Mammary epithelial cell (primary cell): ENCODE measurements at regions of chr22 and their contacts with region 1.

Region 1: GRCh38 chr22:22207845-22208564 is 36.6 kb upstream of the VPREB1 start:
- DNase-seq: peak; percentile 66
- H3K4me3 ChIP-seq: no peak overlapping the region
- H3K27ac ChIP-seq: no peak overlapping the region
- H3K4me1 ChIP-seq: peaks cover 25% of the 10 kb centered on the region
- H3K27me3 ChIP-seq: no peaks in the 10 kb centered on the region
- CTCF ChIP-seq: peak; percentile 80 to 86

Region 2: DNA sequence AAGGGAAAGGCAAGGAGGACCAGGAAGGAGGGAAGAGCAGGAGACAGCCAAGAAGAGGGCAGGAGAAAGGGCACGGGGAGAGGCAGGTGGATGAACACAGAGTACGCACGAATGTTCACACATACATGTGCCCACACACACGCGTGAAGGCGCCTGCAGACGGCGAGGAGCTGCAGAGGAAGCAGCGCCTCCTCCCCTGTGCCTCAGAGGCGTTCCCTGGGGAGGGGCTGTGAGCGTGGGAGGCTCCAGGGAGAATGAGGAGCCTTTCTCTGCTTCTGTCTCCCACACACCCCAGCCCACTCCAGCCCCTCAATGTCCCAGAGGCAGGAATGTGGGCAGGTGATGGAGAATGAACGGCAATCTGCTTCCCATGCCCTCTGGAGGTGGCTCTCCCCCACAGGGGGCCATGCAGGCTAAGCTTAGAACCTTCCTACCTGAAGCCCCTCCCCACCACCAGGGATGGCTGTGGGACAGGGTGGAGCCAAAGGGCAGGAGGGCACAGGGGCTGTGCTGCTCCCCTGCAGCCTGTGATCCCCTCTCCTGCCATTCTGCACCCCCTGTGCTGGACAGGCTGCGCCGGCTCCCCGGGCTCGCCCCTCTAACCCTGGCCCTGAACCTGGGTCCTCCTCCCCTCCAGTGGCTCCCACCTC is 280.7 kb before region 1 on chr22:
- CTCF ChIA-PET with region 1: no interaction called
- dilution Hi-C with region 1: no loop called
- in situ Hi-C with region 1: no loop called
- intact Hi-C with region 1: no loop called
- DNase-seq: no peak
- H3K4me3 ChIP-seq: no peak overlapping the region
- H3K27ac ChIP-seq: no peak overlapping the region
- H3K4me1 ChIP-seq: no peaks in the 10 kb centered on the region
- H3K27me3 ChIP-seq: no peaks in the 10 kb centered on the region
- CTCF ChIP-seq: no peak

Region 3: GRCh38 chr22:22060200-22061084 is 147.6 kb before region 1 on chr22:
- CTCF ChIA-PET with region 1: interaction called, 5 read pairs
- dilution Hi-C with region 1: no loop called
- in situ Hi-C with region 1: no loop called
- intact Hi-C with region 1: loop called (anchors 1 kb)
- DNase-seq: peak; percentile 39
- H3K4me3 ChIP-seq: no peak overlapping the region
- H3K27ac ChIP-seq: no peak overlapping the region
- H3K4me1 ChIP-seq: peaks cover 4% of the 10 kb centered on the region
- H3K27me3 ChIP-seq: no peaks in the 10 kb centered on the region
- CTCF ChIP-seq: peak; percentile 80 to 99

Region 4: DNA sequence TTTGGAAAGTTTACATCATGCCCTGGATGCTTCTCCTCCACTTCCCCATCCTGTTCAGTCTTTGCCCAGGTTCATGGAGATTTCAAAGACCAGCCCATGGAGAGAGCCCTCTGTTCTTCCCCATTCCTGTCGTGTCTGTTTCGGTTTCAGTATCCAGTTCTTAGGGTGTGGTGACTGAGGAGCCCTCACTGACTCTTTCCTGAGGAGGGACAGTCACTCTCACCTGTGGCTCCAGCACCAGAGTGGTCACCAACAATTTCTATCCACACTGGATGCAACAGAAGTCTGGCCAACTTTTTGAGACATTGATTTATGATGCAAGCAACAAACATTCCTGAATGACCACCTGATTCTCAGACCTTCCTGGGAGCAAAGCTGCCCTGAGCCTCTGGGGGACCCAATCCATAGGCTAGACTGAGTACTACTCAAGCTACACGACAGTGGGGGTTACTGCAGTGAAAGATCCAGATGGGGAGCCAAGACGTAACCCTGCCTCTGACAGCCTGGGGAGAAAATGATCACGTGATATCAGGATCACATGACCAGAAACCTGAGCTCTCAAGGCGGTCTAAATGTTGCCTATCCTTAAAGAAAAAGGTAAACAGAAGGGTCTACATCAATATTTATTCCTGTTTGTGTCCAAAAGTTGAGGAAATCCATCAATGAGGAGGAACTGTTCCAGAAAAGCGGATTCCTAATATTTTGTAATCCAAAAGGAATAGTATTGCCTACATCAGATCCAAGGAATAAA is 39.6 kb before region 1 on chr22:
- CTCF ChIA-PET with region 1: no interaction called
- dilution Hi-C with region 1: no loop called
- in situ Hi-C with region 1: no loop called
- intact Hi-C with region 1: no loop called
- DNase-seq: peak; percentile 42
- H3K4me3 ChIP-seq: no peak overlapping the region
- H3K27ac ChIP-seq: no peak overlapping the region
- H3K4me1 ChIP-seq: no peaks in the 10 kb centered on the region
- H3K27me3 ChIP-seq: no peaks in the 10 kb centered on the region
- CTCF ChIP-seq: no peak

Region 5: DNA sequence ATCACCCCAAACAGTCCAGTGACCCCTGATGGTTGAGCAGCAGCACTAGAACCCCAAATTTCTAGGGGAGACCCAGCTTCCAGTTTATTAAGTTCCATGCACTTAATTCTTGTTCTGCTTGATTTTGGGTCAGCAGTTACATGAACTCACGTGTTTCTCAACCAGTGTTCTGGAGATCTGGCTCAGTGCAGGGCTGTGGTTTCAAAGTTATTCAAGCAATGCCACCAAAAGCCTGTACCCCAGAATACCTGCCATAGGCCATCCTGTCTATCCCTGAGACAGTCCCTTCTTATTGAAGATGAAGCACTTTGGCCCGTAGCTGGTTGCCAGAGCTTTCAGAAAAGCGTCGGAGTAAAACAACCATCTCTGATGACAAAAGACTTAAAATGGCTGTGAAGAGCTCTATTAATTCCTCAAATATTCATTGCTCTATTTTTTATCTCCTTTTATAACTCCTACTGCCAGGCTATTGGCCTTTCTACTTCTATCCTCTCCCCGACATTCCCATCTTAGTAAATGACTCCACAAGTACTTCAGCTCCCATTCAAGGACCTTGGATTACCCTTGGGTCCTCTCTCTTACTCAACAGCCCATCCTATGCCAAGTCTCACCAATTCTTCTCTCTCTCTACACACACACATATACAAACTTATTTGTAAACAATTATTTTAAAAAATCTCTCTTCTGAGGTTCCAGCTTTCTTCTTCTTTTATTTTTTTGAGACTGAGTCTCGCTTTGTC is 18.6 kb after region 1 on chr22:
- CTCF ChIA-PET with region 1: interaction called, 20 read pairs
- dilution Hi-C with region 1: no loop called
- in situ Hi-C with region 1: no loop called
- intact Hi-C with region 1: no loop called
- DNase-seq: no peak
- H3K4me3 ChIP-seq: no peak overlapping the region
- H3K27ac ChIP-seq: no peak overlapping the region
- H3K4me1 ChIP-seq: no peaks in the 10 kb centered on the region
- H3K27me3 ChIP-seq: no peaks in the 10 kb centered on the region
- CTCF ChIP-seq: no peak

Region 6: DNA sequence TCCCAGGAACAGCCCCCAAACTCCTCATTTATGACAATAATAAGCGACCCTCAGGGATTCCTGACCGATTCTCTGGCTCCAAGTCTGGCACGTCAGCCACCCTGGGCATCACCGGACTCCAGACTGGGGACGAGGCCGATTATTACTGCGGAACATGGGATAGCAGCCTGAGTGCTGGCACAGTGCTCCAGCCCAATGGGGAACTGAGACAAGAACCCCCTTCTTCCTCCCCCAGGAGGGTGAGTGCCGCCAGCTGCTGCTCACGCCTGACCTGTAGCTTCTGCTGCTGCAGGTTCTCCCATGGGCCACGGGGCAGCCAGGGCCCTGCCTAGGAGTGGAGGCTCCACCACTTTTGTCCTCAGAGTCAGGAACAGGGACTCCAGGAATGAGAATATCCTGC is 114.8 kb after region 1 on chr22:
- CTCF ChIA-PET with region 1: no interaction called
- dilution Hi-C with region 1: loop called (anchors 5 kb)
- in situ Hi-C with region 1: no loop called
- intact Hi-C with region 1: loop called (anchors 1 kb)
- DNase-seq: no peak
- H3K4me3 ChIP-seq: no peak overlapping the region
- H3K27ac ChIP-seq: no peak overlapping the region
- H3K4me1 ChIP-seq: no peaks in the 10 kb centered on the region
- H3K27me3 ChIP-seq: no peaks in the 10 kb centered on the region
- CTCF ChIP-seq: no peak

Region 7: DNA sequence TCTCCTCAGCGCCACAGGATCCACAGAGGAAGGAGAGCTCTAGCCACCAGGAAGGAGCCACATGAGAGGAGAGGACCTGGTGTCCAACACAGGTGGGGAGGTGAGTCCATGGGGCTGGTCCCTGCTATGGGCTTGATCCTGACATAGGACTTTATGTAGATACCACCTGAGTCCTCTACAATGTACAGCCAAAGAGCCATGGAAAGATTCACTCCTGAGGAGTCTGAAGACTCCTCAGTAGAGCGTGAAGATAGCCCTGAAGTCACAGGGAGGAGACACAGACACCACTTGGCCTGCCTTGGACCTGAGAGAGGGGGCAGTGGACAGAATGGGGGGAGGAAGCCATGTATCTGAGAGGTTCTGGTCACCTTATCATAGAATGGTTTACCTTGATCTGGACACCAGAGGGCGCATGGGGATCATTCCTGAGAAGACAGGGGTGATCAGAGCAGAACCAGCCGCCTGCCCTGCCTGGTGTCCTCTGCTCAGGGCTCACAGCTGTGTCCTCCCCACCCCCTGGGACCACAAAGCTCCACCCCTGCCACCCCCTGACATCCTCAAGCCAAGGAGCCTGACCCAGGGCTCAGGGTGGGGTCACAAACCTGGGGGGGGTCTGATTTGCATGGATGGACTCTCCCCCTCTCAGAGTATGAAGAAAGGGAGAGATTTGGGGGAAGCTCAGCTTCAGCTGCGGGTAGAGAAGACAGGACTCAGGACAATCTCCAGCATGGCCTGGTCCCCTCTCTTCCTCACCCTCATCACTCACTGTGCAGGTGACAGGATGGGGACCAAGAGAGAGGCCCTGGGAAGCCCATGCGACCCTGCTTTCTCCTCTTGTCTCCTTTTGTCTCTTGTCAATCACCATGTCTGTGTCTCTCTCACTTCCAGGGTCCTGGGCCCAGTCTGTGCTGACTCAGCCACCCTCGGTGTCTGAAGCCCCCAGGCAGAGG is 223.5 kb after region 1 on chr22:
- CTCF ChIA-PET with region 1: no interaction called
- dilution Hi-C with region 1: no loop called
- in situ Hi-C with region 1: no loop called
- intact Hi-C with region 1: loop called (anchors 5 kb)
- DNase-seq: peak; percentile 25
- H3K4me3 ChIP-seq: no peak overlapping the region
- H3K27ac ChIP-seq: no peak overlapping the region
- H3K4me1 ChIP-seq: no peaks in the 10 kb centered on the region
- H3K27me3 ChIP-seq: peaks cover 1% of the 10 kb centered on the region
- CTCF ChIP-seq: peak; percentile 44 to 71